ENCODE measurements at regions of chr1 and their contacts with region 1.

Region 1: GRCh38 chr1:202397256-202397655 is 48.8 kb downstream of the PPP1R12B start:
- DNase-seq: no peak
- ATAC-seq: no peak
- H3K4me3 ChIP-seq: no peak overlapping the region
- H3K27ac ChIP-seq: peak overlapping the region; percentile 21 to 77 (median 68)
- H3K4me1 ChIP-seq: peaks cover 56 to 67% of the 10 kb centered on the region in 2 donors
- H3K27me3 ChIP-seq: no peaks in the 10 kb centered on the region
- CTCF ChIP-seq: no peak
- POLR2A ChIP-seq: no peak

Region 2: GRCh38 chr1:202235856-202236837 is 161.1 kb before region 1 on chr1:
- in situ Hi-C with region 1: no loop called
- intact Hi-C with region 1: no loop called
- DNase-seq: peak; percentile 10 to 44
- ATAC-seq: peak; percentile 28 to 82
- H3K4me3 ChIP-seq: no peak overlapping the region
- H3K27ac ChIP-seq: no peak overlapping the region
- H3K4me1 ChIP-seq: peaks cover 0 to under 1% of the 10 kb centered on the region in 2 donors
- H3K27me3 ChIP-seq: peaks cover 0 to 5% (median 0%) of the 10 kb centered on the region in 3 donors
- CTCF ChIP-seq: peak; percentile 43 to 83 (median 72)
- POLR2A ChIP-seq: no peak

Region 3: DNA sequence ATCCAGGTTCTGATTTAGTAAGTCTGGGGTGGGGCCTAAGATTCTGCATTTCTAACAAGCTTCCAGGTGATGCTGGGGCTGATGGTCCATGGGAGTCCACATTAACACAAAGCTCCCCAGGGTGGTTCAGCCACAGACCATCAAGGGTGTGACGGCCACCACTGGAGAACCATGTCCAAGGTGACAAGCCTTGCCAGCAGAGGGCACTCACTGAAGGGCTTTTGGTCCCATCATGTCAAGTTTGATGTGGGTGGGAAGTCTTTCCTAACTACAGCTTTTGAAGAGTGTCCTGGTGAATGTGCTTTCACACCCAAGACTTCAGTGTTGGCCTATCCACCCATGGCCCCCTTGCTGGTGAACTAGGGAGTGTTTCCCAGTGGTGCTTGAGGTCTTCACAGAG is 122.6 kb before region 1 on chr1:
- in situ Hi-C with region 1: no loop called
- intact Hi-C with region 1: no loop called
- DNase-seq: no peak
- ATAC-seq: no peak
- H3K4me3 ChIP-seq: no peak overlapping the region
- H3K27ac ChIP-seq: no peak overlapping the region
- H3K4me1 ChIP-seq: no peaks in the 10 kb centered on the region
- H3K27me3 ChIP-seq: no peaks in the 10 kb centered on the region
- CTCF ChIP-seq: peak in 4 of 5 experiments; percentile 13 to 44 (median 36)
- POLR2A ChIP-seq: no peak

Region 4: GRCh38 chr1:202365092-202365815 is 32.0 kb before region 1 on chr1:
- in situ Hi-C with region 1: no loop called
- intact Hi-C with region 1: loop called (anchors 1 kb)
- DNase-seq: no peak
- ATAC-seq: peak; percentile 38 to 70
- H3K4me3 ChIP-seq: no peak overlapping the region
- H3K27ac ChIP-seq: peak overlapping the region; percentile 3 to 49 (median 32)
- H3K4me1 ChIP-seq: peaks cover 23 to 35% of the 10 kb centered on the region in 2 donors
- H3K27me3 ChIP-seq: no peaks in the 10 kb centered on the region
- CTCF ChIP-seq: no peak
- POLR2A ChIP-seq: no peak

Measured in gastrocnemius medialis (tissue), 4 donors.